PC-3 (cell line): ENCODE measurements at regions of chr19 and their contacts with region 1.

Region 1: GRCh38 chr19:6737284-6738046 is at the start of gene GPR108:
- DNase-seq: peak; percentile 100
- ATAC-seq: peak; percentile 65
- H3K4me3 ChIP-seq: peak within 1 kb of the TSS; percentile 83
- H3K27ac ChIP-seq: peak within 1 kb of the TSS; percentile 50
- H3K4me1 ChIP-seq: peaks cover 28% of the 10 kb centered on the region
- H3K27me3 ChIP-seq: no peaks in the 10 kb centered on the region
- CTCF ChIP-seq: no peak
- total RNA-seq, gene GPR108: 59.0 and 78.7 TPM in 2 replicates

Region 2: GRCh38 chr19:6516659-6517291 is 220.7 kb before region 1 on chr19:
- CTCF ChIA-PET with region 1: interaction called, 6 read pairs
- POLR2A ChIA-PET with region 1: no interaction called
- intact Hi-C with region 1: loop called (anchors 1 kb)
- DNase-seq: peak; percentile 93
- ATAC-seq: peak; percentile 86
- H3K4me3 ChIP-seq: peak overlapping the region; percentile 74
- H3K27ac ChIP-seq: no peak overlapping the region
- H3K4me1 ChIP-seq: peaks cover 15% of the 10 kb centered on the region
- H3K27me3 ChIP-seq: no peaks in the 10 kb centered on the region
- CTCF ChIP-seq: peak; percentile 99

Region 3: DNA sequence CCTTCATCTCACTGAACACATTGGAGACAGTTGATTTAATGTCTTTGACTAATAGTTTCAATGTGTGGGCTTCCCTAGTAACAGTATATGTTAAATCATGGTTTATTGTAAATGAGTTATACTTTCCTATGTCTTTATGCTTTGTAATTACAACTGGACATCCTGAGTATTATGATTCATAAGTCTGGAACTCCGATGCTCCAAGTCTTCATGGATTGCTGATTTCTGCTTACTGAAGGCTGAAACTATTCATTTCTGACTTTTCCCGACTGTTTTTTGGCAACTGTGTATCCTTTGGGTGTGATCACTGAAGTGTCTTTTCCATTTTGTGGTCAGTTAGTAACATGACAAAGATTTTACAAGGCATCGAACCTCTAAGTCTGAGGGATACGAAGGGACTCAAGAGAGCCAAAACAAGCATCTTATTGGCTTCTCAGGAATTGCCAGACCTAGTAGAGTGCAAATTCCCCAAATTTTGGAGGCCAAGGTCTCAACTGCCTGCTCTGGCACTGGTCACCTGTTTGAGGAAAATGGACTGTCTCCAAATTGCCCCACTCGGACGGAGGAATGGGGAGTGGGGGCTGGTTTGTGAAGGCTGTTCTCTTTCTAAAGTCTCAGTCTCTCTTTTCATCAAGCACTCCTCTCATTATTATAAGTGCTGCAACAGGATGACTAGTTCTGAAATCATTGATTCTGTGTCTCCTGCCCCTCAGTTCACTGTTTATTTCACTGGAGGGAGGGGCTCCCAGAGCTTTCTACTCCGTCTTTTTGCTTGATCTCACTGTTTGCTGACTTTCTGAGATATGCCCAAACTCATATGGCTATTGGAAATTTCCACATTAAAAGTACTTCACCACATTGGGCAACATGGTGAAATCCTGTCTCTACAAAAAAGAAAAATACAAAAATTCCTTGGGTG is 126.3 kb before region 1 on chr19:
- CTCF ChIA-PET with region 1: no interaction called
- POLR2A ChIA-PET with region 1: no interaction called
- intact Hi-C with region 1: loop called (anchors 5 kb)
- DNase-seq: peak; percentile 98
- ATAC-seq: peak; percentile 85
- H3K4me3 ChIP-seq: peak overlapping the region; percentile 36; the same call in 1 of the 2 replicates
- H3K27ac ChIP-seq: peak overlapping the region; percentile 92
- H3K4me1 ChIP-seq: peaks cover 29% of the 10 kb centered on the region
- H3K27me3 ChIP-seq: no peaks in the 10 kb centered on the region
- CTCF ChIP-seq: no peak

Region 4: GRCh38 chr19:6697291-6697690 is 40.2 kb before region 1 on chr19:
- CTCF ChIA-PET with region 1: no interaction called
- POLR2A ChIA-PET with region 1: no interaction called
- intact Hi-C with region 1: no loop called
- DNase-seq: no peak
- ATAC-seq: no peak
- H3K4me3 ChIP-seq: no peak overlapping the region
- H3K27ac ChIP-seq: no peak overlapping the region
- H3K4me1 ChIP-seq: no peaks in the 10 kb centered on the region
- H3K27me3 ChIP-seq: no peaks in the 10 kb centered on the region
- CTCF ChIP-seq: no peak

Region 5: DNA sequence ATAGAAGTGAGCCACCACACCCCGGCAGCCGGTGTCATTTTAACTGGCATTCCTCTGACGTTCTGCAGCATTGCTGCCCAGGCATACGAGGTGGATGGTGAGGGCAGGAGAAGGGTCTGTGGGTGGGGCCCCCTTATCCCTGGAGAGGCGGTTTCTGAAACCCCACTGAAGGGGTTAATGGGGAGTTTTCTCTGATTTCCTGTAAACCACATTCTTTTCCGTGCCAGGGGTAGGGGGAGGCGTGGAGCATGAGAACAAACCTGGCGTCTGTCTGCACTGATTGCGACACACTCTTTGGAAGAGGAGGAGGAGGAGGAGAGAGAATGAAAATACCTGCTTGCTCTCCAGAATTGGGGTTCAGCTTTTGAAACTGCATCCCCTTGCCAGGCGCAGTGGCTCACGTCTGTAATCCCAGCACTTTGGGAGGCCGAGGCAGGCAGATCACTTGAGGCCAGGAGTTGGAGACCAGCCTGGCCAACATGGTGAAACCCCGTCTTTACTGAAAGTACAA is 14.3 kb before region 1 on chr19:
- CTCF ChIA-PET with region 1: no interaction called
- POLR2A ChIA-PET with region 1: no interaction called
- intact Hi-C with region 1: no loop called
- DNase-seq: peak; percentile 50
- ATAC-seq: no peak
- H3K4me3 ChIP-seq: no peak overlapping the region
- H3K27ac ChIP-seq: no peak overlapping the region
- H3K4me1 ChIP-seq: no peaks in the 10 kb centered on the region; the same call in 1 of the 2 replicates
- H3K27me3 ChIP-seq: no peaks in the 10 kb centered on the region
- CTCF ChIP-seq: no peak

Region 6: GRCh38 chr19:6767357-6768235 is 30.1 kb after region 1 on chr19 and contains the start of gene SH2D3A:
- CTCF ChIA-PET with region 1: no interaction called
- POLR2A ChIA-PET with region 1: no interaction called
- intact Hi-C with region 1: loop called (anchors 1 kb)
- DNase-seq: peak; percentile 99
- ATAC-seq: peak; percentile 76
- H3K4me3 ChIP-seq: peak within 1 kb of the TSS; percentile 73
- H3K27ac ChIP-seq: peak within 1 kb of the TSS; percentile 95
- H3K4me1 ChIP-seq: peaks cover 31% of the 10 kb centered on the region
- H3K27me3 ChIP-seq: no peaks in the 10 kb centered on the region
- CTCF ChIP-seq: no peak
- total RNA-seq, gene SH2D3A: 141 and 162 TPM in 2 replicates

Region 7: GRCh38 chr19:6862673-6863078 is 125.2 kb after region 1 on chr19:
- CTCF ChIA-PET with region 1: interaction called, 40 read pairs
- POLR2A ChIA-PET with region 1: no interaction called
- intact Hi-C with region 1: loop called (anchors 1 kb)
- DNase-seq: peak; percentile 96
- ATAC-seq: peak; percentile 85
- H3K4me3 ChIP-seq: peak overlapping the region; percentile 35; the same call in 1 of the 2 replicates
- H3K27ac ChIP-seq: no peak overlapping the region
- H3K4me1 ChIP-seq: peaks cover 6% of the 10 kb centered on the region; the same call in 1 of the 2 replicates
- H3K27me3 ChIP-seq: peaks cover 8% of the 10 kb centered on the region
- CTCF ChIP-seq: peak; percentile 98